ENCODE measurements at regions of chr22 and their contacts with region 1.

Region 1: DNA sequence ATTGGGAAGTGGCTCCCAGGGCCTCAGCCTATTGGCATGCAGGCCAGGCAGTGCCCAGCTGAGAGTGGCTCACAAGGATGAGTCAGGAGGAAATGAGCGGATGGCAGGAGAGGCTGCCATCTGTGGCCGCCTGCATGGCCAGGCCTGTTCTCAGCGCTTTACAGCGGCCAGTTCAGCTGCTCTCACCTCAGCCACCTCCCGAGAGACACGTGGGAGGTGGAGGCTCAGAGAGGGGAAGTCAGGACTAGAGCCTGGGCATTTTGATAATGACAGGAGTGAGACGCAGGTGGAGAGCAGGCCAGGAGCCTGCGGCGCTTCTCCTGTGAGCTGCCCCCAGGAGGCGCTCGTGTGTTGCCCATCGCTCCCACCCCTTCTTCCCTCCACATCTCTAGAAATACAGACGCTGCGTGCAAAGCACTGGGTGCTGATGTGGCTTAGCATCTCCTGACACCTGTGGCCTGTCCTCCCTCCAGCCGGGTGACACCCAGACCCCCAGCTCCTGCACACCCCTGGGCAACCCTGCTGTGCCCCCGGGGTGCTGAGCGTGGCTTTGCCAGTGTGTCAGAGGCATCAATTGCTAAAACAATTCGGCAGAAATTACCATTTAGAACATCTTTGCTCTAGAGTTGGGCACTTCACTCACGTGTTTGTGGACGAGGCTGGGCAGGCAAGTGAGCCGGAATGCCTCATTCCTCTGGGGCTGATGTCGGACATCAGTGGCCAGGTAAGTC is 21.4 kb upstream of the PANX2 start:
- DNase-seq: peak; percentile 89
- H3K4me3 Mint-ChIP-seq: peak overlapping the region; percentile 41
- H3K27ac Mint-ChIP-seq: no peak overlapping the region
- H3K4me1 Mint-ChIP-seq: peaks cover 7% of the 10 kb centered on the region
- H3K27me3 Mint-ChIP-seq: no peaks in the 10 kb centered on the region
- CTCF ChIP-seq: peak; percentile 94

Region 2: GRCh38 chr22:49930739-49931412 is 218.3 kb before region 1 on chr22:
- CTCF ChIA-PET with region 1: interaction called, 7 read pairs
- POLR2A ChIA-PET with region 1: no interaction called
- intact Hi-C with region 1: loop called (anchors 2 kb)
- DNase-seq: peak; percentile 83
- H3K4me3 Mint-ChIP-seq: no peak overlapping the region
- H3K27ac Mint-ChIP-seq: no peak overlapping the region
- H3K4me1 Mint-ChIP-seq: peaks cover 12% of the 10 kb centered on the region
- H3K27me3 Mint-ChIP-seq: no peaks in the 10 kb centered on the region
- CTCF ChIP-seq: peak; percentile 13

Region 3: DNA sequence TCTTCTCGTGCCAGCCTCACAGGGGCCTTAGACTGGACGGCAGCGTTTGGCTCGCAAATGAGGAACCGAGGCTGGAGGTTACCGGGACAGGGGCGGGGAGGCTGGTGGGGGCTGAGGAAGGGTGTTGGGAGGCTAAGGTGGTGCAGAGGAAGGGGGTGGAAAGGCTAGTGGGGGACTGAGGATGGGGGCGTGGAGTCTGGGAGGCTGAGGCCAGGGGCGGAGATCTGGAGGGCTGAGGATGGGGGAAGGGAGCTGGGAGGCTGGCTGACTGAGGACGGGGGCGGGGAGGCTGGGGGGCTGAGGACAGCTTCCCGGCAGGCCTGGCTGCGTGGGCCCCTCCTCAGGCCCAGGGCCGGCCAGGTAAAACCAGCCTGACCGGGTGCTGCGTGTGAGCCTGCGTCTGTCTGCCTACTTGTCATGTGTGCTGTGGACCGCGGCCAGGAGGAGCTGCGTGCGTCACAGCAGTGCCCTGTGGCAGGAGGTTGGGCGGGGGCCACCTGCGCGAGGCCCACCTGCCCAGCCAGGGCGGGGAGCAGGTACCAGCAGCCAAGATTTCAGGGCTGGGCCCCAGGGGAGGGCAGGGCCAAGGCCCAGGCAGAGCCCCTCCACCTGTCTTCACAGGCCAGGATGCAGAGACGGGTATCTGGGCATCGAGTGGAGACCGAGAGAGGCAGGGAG is 198.0 kb before region 1 on chr22:
- CTCF ChIA-PET with region 1: no interaction called
- POLR2A ChIA-PET with region 1: no interaction called
- intact Hi-C with region 1: no loop called
- DNase-seq: peak; percentile 90
- H3K4me3 Mint-ChIP-seq: peak overlapping the region; percentile 29
- H3K27ac Mint-ChIP-seq: peak overlapping the region; percentile 88
- H3K4me1 Mint-ChIP-seq: peaks cover 24% of the 10 kb centered on the region
- H3K27me3 Mint-ChIP-seq: no peaks in the 10 kb centered on the region
- CTCF ChIP-seq: no peak

Region 4: DNA sequence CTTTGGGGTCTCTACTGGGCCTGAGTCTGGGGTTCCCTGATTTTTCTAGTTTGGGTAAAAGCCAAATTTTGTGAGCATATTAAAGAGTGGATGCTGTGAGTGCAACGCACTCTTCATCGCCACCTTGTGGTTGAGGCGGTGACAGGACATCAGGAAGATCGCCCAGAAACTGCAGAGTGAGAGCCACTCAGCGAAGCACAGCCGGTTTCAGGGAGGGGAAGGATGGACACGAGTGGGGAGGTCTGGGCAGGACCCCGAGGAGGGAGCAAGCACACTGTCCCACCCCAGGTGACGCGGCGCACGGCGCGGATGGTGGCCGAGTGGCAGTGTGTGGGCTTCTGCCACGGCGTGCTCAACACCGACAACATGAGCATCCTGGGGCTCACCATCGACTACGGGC is 60.7 kb after region 1 on chr22:
- CTCF ChIA-PET with region 1: interaction called, 19 read pairs
- POLR2A ChIA-PET with region 1: interaction called, 4 read pairs
- intact Hi-C with region 1: loop called (anchors 1 kb)
- DNase-seq: peak; percentile 74
- H3K4me3 Mint-ChIP-seq: no peak overlapping the region
- H3K27ac Mint-ChIP-seq: no peak overlapping the region
- H3K4me1 Mint-ChIP-seq: peaks cover 6% of the 10 kb centered on the region
- H3K27me3 Mint-ChIP-seq: no peaks in the 10 kb centered on the region
- CTCF ChIP-seq: peak; percentile 77

Region 5: DNA sequence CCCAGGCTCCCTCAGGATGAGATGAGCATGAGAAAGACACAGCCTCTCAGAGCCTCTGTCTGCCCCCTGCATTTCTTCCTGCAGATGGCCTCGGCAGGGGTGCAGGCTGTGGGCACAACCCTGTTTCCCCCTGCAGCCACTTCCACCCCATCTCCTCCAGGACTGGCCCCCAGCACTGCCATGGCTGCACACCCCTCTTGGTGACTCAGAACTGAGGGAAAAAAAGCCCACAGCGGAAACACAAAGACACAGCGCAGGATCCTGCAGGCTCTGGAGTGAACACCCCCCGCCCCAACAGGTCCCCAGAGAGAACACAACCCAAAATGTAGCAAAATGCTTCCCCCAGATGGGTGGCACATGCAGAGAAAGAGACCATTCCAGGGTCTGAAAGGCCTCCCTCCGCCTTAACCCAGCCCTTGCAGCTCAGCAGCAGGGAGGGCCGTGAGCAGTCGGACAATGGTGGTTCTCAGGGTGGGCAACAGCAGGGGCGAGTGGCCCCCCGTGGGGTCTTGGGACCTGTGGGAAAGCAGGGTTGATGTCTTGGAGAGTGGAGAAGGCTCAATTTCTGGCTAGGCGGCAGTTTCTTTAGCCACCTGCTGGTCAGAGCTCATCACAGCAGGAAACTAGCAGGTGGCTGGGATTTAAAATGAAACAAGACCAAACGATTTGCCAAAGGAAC is 87.7 kb after region 1 on chr22:
- CTCF ChIA-PET with region 1: interaction called, 10 read pairs
- POLR2A ChIA-PET with region 1: no interaction called
- intact Hi-C with region 1: loop called (anchors 1 kb)
- DNase-seq: no peak
- H3K4me3 Mint-ChIP-seq: no peak overlapping the region
- H3K27ac Mint-ChIP-seq: no peak overlapping the region
- H3K4me1 Mint-ChIP-seq: peaks cover 9% of the 10 kb centered on the region
- H3K27me3 Mint-ChIP-seq: no peaks in the 10 kb centered on the region
- CTCF ChIP-seq: peak; percentile 40